Activated CD4-positive, alpha-beta T cell treated with anti-CD3 and anti-CD28 coated beads for 36 hours (primary cell): ENCODE measurements at regions of chr3 and their contacts with region 1.

Region 1: GRCh38 chr3:13495921-13496723 is 16.0 kb downstream of the HDAC11 start:
- DNase-seq: peak; percentile 84
- ATAC-seq: peak; percentile 97
- H3K4me3 Mint-ChIP-seq: no peak overlapping the region
- H3K27ac Mint-ChIP-seq: no peak overlapping the region
- H3K4me1 Mint-ChIP-seq: no peaks in the 10 kb centered on the region
- H3K27me3 Mint-ChIP-seq: no peaks in the 10 kb centered on the region

Region 2: DNA sequence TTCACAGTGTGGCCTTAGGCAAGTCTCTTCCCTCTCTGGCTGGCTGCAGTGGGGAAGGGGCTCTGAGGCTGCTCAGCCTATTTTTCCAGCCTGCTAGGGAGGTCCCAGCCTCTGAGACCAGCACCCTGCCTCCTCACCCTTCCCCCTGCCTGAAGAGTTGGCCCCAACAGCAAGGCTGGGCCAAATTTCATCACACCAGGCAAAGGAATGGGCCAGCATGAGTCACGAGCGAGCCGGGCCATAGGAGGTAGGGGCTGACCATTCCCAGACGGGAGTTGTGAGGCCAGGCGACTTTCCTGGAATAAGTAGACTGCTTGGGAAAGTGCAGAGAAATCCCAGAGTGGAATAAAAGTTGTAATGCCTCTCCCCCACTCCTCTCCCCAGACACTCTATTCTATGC is 47.1 kb after region 1 on chr3:
- CTCF ChIA-PET with region 1: no interaction called
- POLR2A ChIA-PET with region 1: no interaction called
- intact Hi-C with region 1: no loop called
- DNase-seq: no peak
- ATAC-seq: no peak
- H3K4me3 Mint-ChIP-seq: no peak overlapping the region
- H3K27ac Mint-ChIP-seq: no peak overlapping the region
- H3K4me1 Mint-ChIP-seq: peaks cover 17% of the 10 kb centered on the region
- H3K27me3 Mint-ChIP-seq: peaks cover 19% of the 10 kb centered on the region

Region 3: GRCh38 chr3:13648060-13649001 is 152.2 kb after region 1 on chr3:
- CTCF ChIA-PET with region 1: interaction called, 246 read pairs
- POLR2A ChIA-PET with region 1: interaction called, 4 read pairs
- intact Hi-C with region 1: loop called (anchors 1 kb)
- DNase-seq: peak; percentile 87
- ATAC-seq: peak; percentile 63
- H3K4me3 Mint-ChIP-seq: no peak overlapping the region
- H3K27ac Mint-ChIP-seq: no peak overlapping the region
- H3K4me1 Mint-ChIP-seq: peaks cover 18% of the 10 kb centered on the region
- H3K27me3 Mint-ChIP-seq: peaks cover 14% of the 10 kb centered on the region

Region 4: GRCh38 chr3:13657660-13658435 is 161.7 kb after region 1 on chr3:
- CTCF ChIA-PET with region 1: interaction called, 246 read pairs
- POLR2A ChIA-PET with region 1: no interaction called
- intact Hi-C with region 1: no loop called
- DNase-seq: peak; percentile 83
- ATAC-seq: peak; percentile 87
- H3K4me3 Mint-ChIP-seq: no peak overlapping the region
- H3K27ac Mint-ChIP-seq: no peak overlapping the region
- H3K4me1 Mint-ChIP-seq: peaks cover 18% of the 10 kb centered on the region
- H3K27me3 Mint-ChIP-seq: peaks cover 2% of the 10 kb centered on the region

Region 5: DNA sequence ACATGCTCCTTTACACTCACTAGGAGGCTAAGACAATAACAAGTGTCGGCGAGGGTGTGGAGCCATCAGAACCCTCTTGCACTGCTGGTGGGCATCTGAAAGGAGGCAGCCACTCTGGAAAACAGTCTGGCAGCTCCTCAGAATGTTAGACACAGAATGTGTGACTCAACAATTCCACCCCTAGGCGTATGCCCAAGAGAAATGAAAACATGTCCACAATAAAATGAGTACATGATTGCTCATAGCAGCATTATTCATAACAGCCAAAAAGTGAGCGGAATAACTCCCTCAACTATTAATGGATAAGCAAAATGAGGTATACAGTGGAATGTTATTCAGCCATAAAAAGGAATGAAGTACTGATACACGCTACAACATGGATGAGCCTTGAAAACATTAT is 325.9 kb after region 1 on chr3:
- CTCF ChIA-PET with region 1: no interaction called
- POLR2A ChIA-PET with region 1: no interaction called
- intact Hi-C with region 1: no loop called
- DNase-seq: peak; percentile 37
- ATAC-seq: peak; percentile 74
- H3K4me3 Mint-ChIP-seq: no peak overlapping the region
- H3K27ac Mint-ChIP-seq: peak overlapping the region; percentile 39
- H3K4me1 Mint-ChIP-seq: peaks cover 8% of the 10 kb centered on the region
- H3K27me3 Mint-ChIP-seq: no peaks in the 10 kb centered on the region